ENCODE measurements at regions of chr9 and their contacts with region 1.

Region 1: GRCh38 chr9:38088006-38088925 is 19.2 kb upstream of the SHB start:
- DNase-seq: no peak
- ATAC-seq: peak; percentile 70
- H3K4me3 ChIP-seq: no peak overlapping the region
- H3K27ac ChIP-seq: peak overlapping the region; percentile 13; the same call in 1 of the 2 replicates
- H3K4me1 ChIP-seq: peaks cover 37% of the 10 kb centered on the region
- H3K27me3 ChIP-seq: no peaks in the 10 kb centered on the region
- CTCF ChIP-seq: peak; percentile 86 to 98 (median 97)
- EP300 ChIP-seq: no peak
- POLR2A ChIP-seq: no peak
- RAD21 ChIP-seq: peak; percentile 90

Region 2: DNA sequence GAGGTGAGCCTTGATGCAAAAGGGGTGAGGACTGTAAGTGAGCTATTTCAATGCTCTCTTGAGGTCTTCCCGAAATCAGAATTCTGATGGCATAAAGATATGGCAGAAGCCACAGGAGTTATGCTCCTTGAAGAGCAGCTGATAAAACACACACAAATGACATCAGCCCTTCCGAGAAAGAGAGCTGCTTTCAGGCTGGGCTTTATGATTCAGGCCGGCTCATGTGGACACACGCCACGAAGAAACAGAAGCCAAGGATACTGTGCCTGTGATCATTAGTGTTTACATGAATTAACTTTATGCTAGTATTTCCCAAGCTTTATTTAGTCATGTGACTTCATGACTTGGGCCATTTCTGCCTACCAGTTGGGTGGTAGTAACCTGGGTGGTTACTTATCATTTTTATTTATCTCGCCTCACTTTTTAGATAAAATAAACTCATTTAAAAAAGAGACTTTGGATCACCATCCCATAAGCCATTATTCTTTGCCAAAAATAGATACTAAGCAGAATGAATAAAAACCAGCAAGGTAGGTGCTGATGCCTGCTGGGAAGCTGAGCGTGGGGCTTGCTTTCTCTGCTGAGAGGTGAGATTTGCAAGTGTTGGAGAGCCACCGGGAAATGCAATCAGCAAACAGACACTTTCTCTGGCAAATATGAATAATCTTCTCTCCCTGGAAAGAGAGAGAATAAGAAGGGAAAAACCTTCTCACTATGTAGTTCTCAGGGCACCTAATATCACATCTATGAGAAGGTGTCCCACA is 111.4 kb before region 1 on chr9:
- CTCF ChIA-PET with region 1: no interaction called
- POLR2A ChIA-PET with region 1: no interaction called
- RAD21 ChIA-PET with region 1: no interaction called
- SMC1A ChIA-PET with region 1: no interaction called
- in situ Hi-C with region 1: no loop called
- intact Hi-C with region 1: no loop called
- DNase-seq: no peak
- ATAC-seq: no peak
- H3K4me3 ChIP-seq: no peak overlapping the region
- H3K27ac ChIP-seq: no peak overlapping the region
- H3K4me1 ChIP-seq: no peaks in the 10 kb centered on the region
- H3K27me3 ChIP-seq: no peaks in the 10 kb centered on the region
- CTCF ChIP-seq: no peak
- EP300 ChIP-seq: no peak
- POLR2A ChIP-seq: no peak
- RAD21 ChIP-seq: no peak

Region 3: GRCh38 chr9:38061326-38061977 is 26.8 kb before region 1 on chr9:
- CTCF ChIA-PET with region 1: interaction called, 8 read pairs
- POLR2A ChIA-PET with region 1: no interaction called
- RAD21 ChIA-PET with region 1: interaction called, 7 read pairs
- SMC1A ChIA-PET with region 1: interaction called, 13 read pairs
- in situ Hi-C with region 1: no loop called
- intact Hi-C with region 1: no loop called
- DNase-seq: peak; percentile 65
- ATAC-seq: peak; percentile 81
- H3K4me3 ChIP-seq: no peak overlapping the region
- H3K27ac ChIP-seq: no peak overlapping the region
- H3K4me1 ChIP-seq: peaks cover 42% of the 10 kb centered on the region
- H3K27me3 ChIP-seq: peaks cover 0 to 2% of the 10 kb centered on the region in 2 experiments; a peak in 2 of 4 replicates
- CTCF ChIP-seq: no peak
- EP300 ChIP-seq: peak in 1 of 2 experiments; percentile 54; a peak in 1 of 4 replicates
- POLR2A ChIP-seq: no peak
- RAD21 ChIP-seq: no peak

Region 4: DNA sequence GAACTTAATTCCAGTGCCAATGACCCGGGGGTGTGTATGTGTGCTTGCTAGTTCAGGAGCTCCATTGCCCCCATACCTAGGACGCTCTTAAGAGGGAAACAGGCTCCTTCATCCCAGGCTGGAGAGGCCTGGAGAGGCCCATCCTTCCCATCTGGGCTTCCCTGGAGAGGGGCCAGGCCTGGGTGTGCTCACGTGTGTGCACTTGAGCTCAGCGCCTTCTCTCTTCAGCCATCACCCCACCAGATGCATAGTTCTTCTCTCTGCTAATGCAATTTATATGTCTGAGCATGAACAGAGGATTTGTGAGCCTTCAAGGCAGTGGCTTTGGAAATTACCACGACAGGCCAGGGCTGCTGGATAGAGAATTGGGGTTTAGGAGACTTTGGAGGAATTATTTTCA is 29.4 kb after region 1 on chr9:
- CTCF ChIA-PET with region 1: interaction called, 148 read pairs
- POLR2A ChIA-PET with region 1: interaction called, 3 read pairs
- RAD21 ChIA-PET with region 1: interaction called, 16 read pairs
- SMC1A ChIA-PET with region 1: interaction called, 359 read pairs
- in situ Hi-C with region 1: no loop called
- intact Hi-C with region 1: no loop called
- DNase-seq: no peak
- ATAC-seq: no peak
- H3K4me3 ChIP-seq: no peak overlapping the region
- H3K27ac ChIP-seq: no peak overlapping the region
- H3K4me1 ChIP-seq: no peaks in the 10 kb centered on the region
- H3K27me3 ChIP-seq: no peaks in the 10 kb centered on the region; a peak in 1 of 4 replicates
- CTCF ChIP-seq: no peak
- EP300 ChIP-seq: no peak
- POLR2A ChIP-seq: no peak
- RAD21 ChIP-seq: no peak

Region 5: GRCh38 chr9:38149647-38150046 is 61.4 kb after region 1 on chr9:
- CTCF ChIA-PET with region 1: interaction called, 34 read pairs
- POLR2A ChIA-PET with region 1: no interaction called
- RAD21 ChIA-PET with region 1: interaction called, 40 read pairs
- SMC1A ChIA-PET with region 1: interaction called, 169 read pairs
- in situ Hi-C with region 1: no loop called
- intact Hi-C with region 1: no loop called
- DNase-seq: no peak
- ATAC-seq: no peak
- H3K4me3 ChIP-seq: no peak overlapping the region
- H3K27ac ChIP-seq: no peak overlapping the region
- H3K4me1 ChIP-seq: no peaks in the 10 kb centered on the region
- H3K27me3 ChIP-seq: no peaks in the 10 kb centered on the region; a peak in 1 of 4 replicates
- CTCF ChIP-seq: no peak
- EP300 ChIP-seq: no peak
- POLR2A ChIP-seq: no peak
- RAD21 ChIP-seq: no peak

Region 6: DNA sequence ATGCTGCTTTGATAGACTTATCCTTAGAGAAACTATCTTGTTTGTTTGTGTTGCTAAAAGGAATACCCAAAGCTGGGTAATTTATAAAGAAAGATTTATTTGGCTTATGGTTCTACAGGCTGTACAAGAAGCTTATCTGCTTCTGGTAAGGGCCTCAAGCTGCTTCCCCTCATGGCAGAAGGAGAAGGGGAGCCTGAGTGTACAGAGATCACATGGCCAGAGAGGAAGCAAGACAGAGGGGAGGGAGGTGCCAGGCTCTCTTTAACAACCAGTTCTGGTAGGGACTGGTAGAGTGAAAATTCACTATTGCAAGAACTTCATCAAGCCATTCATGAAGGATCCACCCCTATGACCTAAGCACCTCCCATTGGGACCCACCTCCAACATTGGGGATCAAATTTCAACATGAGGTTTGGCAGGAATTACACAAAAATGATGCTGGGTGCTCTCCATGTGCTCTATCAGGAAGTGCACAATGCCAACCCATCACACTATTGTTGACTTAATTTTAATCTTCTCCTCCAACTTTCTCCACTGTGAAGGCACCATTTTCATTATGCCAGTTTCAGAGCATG is 95.8 kb after region 1 on chr9:
- CTCF ChIA-PET with region 1: interaction called, 7 read pairs
- POLR2A ChIA-PET with region 1: interaction called, 5 read pairs
- RAD21 ChIA-PET with region 1: interaction called, 33 read pairs
- SMC1A ChIA-PET with region 1: interaction called, 112 read pairs
- in situ Hi-C with region 1: no loop called
- intact Hi-C with region 1: no loop called
- DNase-seq: no peak
- ATAC-seq: no peak
- H3K4me3 ChIP-seq: no peak overlapping the region
- H3K27ac ChIP-seq: no peak overlapping the region
- H3K4me1 ChIP-seq: peaks cover 14% of the 10 kb centered on the region
- H3K27me3 ChIP-seq: peaks cover 0 to 2% of the 10 kb centered on the region in 2 experiments; a peak in 1 of 4 replicates
- CTCF ChIP-seq: no peak
- EP300 ChIP-seq: no peak
- POLR2A ChIP-seq: no peak
- RAD21 ChIP-seq: no peak

Region 7: GRCh38 chr9:38339087-38339486 is 250.8 kb after region 1 on chr9:
- CTCF ChIA-PET with region 1: interaction called, 17 read pairs
- POLR2A ChIA-PET with region 1: no interaction called
- RAD21 ChIA-PET with region 1: interaction called, 3 read pairs
- SMC1A ChIA-PET with region 1: interaction called, 24 read pairs
- in situ Hi-C with region 1: no loop called
- intact Hi-C with region 1: no loop called
- DNase-seq: peak; percentile 31
- ATAC-seq: peak; percentile 86
- H3K4me3 ChIP-seq: no peak overlapping the region
- H3K27ac ChIP-seq: no peak overlapping the region
- H3K4me1 ChIP-seq: no peaks in the 10 kb centered on the region
- H3K27me3 ChIP-seq: no peaks in the 10 kb centered on the region; a peak in 3 of 4 replicates
- CTCF ChIP-seq: no peak
- EP300 ChIP-seq: no peak
- POLR2A ChIP-seq: no peak
- RAD21 ChIP-seq: 0 out of 2 replicates have a peak, but pooled peaks have one; percentile 2

Region 8: GRCh38 chr9:38467404-38467803 is 379.1 kb after region 1 on chr9:
- CTCF ChIA-PET with region 1: no interaction called
- POLR2A ChIA-PET with region 1: no interaction called
- RAD21 ChIA-PET with region 1: no interaction called
- SMC1A ChIA-PET with region 1: no interaction called
- in situ Hi-C with region 1: no loop called
- intact Hi-C with region 1: no loop called
- DNase-seq: no peak
- ATAC-seq: peak; percentile 51
- H3K4me3 ChIP-seq: no peak overlapping the region
- H3K27ac ChIP-seq: no peak overlapping the region
- H3K4me1 ChIP-seq: no peaks in the 10 kb centered on the region
- H3K27me3 ChIP-seq: peaks cover 0 to 3% of the 10 kb centered on the region in 2 experiments; a peak in 1 of 4 replicates
- CTCF ChIP-seq: no peak
- EP300 ChIP-seq: no peak
- POLR2A ChIP-seq: no peak
- RAD21 ChIP-seq: no peak

Measured in GM12878 (cell line).